Naive thymus-derived CD4-positive, alpha-beta T cell (primary cell): ENCODE measurements at regions of chr10 and their contacts with region 1.

Region 1: GRCh38 chr10:15370856-15371701 is at the start of gene FAM171A1:
- DNase-seq: peak; percentile 37 to 71 (median 62)
- ATAC-seq: peak; percentile 91
- H3K4me3 ChIP-seq: peak within 1 kb of the TSS; percentile 47
- H3K4me3 Mint-ChIP-seq: peak within 1 kb of the TSS; percentile 59 to 92 (median 83)
- H3K27ac ChIP-seq: peak within 1 kb of the TSS; percentile 21
- H3K27ac Mint-ChIP-seq: peak within 1 kb of the TSS in 8 of 9 donors; percentile 18 to 89 (median 62)
- H3K4me1 ChIP-seq: peaks cover 3 to 5% of the 10 kb centered on the region in 2 donors
- H3K4me1 Mint-ChIP-seq: peaks cover 4 to 12% (median 5%) of the 10 kb centered on the region in 7 donors
- H3K27me3 ChIP-seq: peaks cover 0 to 9% of the 10 kb centered on the region in 2 donors
- H3K27me3 Mint-ChIP-seq: peaks cover 0 to 81% (median 6%) of the 10 kb centered on the region in 5 donors
- total RNA-seq, gene FAM171A1: 3.2 to 8.0 (median 4.9) TPM

Region 2: GRCh38 chr10:14500172-14500765 is 870.8 kb before region 1 on chr10:
- CTCF ChIA-PET with region 1: no interaction called
- POLR2A ChIA-PET with region 1: no interaction called
- intact Hi-C with region 1: loop called in 1 of 2 experiments (anchors 5 kb)
- DNase-seq: no peak
- ATAC-seq: no peak
- H3K4me3 ChIP-seq: no peak overlapping the region
- H3K4me3 Mint-ChIP-seq: no peak overlapping the region
- H3K27ac ChIP-seq: no peak overlapping the region
- H3K27ac Mint-ChIP-seq: peak overlapping the region in 4 of 9 donors; percentile 28 to 56 (median 40)
- H3K4me1 ChIP-seq: no peaks in the 10 kb centered on the region
- H3K4me1 Mint-ChIP-seq: peaks cover 4 to 15% (median 6%) of the 10 kb centered on the region in 7 donors
- H3K27me3 ChIP-seq: no peaks in the 10 kb centered on the region
- H3K27me3 Mint-ChIP-seq: peaks cover 0 to 12% (median 0%) of the 10 kb centered on the region in 5 donors

Region 3: GRCh38 chr10:15097011-15097812 is 273.9 kb before region 1 on chr10 and contains the start of gene RPP38:
- CTCF ChIA-PET with region 1: no interaction called
- POLR2A ChIA-PET with region 1: no interaction called
- intact Hi-C with region 1: loop called in 1 of 2 experiments (anchors 5 kb)
- DNase-seq: peak; percentile 88 to 98 (median 95)
- ATAC-seq: peak; percentile 85
- H3K4me3 ChIP-seq: peak within 1 kb of the TSS; percentile 80
- H3K4me3 Mint-ChIP-seq: peak within 1 kb of the TSS; percentile 91 to 100 (median 98)
- H3K27ac ChIP-seq: peak within 1 kb of the TSS; percentile 94
- H3K27ac Mint-ChIP-seq: peak within 1 kb of the TSS; percentile 94 to 100 (median 98)
- H3K4me1 ChIP-seq: peaks cover 16 to 22% of the 10 kb centered on the region in 2 donors
- H3K4me1 Mint-ChIP-seq: peaks cover 22 to 50% (median 40%) of the 10 kb centered on the region in 7 donors
- H3K27me3 ChIP-seq: no peaks in the 10 kb centered on the region
- H3K27me3 Mint-ChIP-seq: peaks cover 0 to 3% (median 0%) of the 10 kb centered on the region in 5 donors
- total RNA-seq, gene RPP38: 7.6 to 22.4 (median 16.0) TPM

Region 4: DNA sequence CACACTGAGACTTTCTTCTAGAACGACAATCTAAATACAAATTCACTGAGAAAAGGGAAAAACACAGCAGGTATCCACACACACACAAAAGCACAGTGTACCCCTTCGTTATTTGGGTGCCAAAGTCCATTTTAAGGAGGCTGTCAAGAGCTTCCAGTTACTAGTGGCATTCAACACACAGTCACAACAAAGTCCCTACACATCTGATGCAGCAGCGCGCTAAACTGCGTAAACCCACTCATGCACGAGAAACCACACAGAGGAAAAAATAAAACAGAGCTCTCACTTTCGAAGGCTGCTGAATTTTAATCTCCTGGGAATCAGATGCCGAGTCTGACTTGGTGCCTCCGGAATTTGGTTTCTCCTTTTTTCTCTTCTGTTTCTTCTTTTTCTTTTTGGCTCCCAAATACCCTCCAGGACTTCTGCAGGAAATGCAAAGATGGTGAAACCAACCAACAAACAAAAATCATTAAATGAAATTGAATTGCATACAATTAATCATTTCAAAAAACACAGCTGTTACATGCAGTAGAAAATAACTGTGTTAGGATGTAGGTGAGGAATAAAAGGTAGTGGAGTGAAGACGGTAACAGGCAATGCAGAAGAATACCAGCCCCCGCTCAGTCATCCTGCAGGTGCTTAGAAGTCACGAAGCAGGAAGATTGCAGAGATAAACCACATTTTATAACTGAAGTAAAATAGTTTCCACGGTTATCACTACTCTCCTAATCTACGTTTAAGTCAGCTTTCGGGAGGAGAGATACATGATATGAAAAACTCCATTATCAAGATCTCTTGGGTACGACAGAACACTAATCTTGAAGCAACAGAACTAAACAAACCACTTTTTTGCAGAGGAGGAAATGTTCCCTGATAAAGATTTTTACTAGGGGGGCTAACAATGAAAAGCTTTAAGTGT is 229.7 kb before region 1 on chr10:
- CTCF ChIA-PET with region 1: no interaction called
- POLR2A ChIA-PET with region 1: no interaction called
- intact Hi-C with region 1: loop called in 1 of 2 experiments (anchors 5 kb)
- DNase-seq: peak in 3 of 9 donors; percentile 8 to 31 (median 9)
- ATAC-seq: peak; percentile 49
- H3K4me3 ChIP-seq: no peak overlapping the region
- H3K4me3 Mint-ChIP-seq: peak overlapping the region; percentile 21 to 83 (median 66)
- H3K27ac ChIP-seq: no peak overlapping the region
- H3K27ac Mint-ChIP-seq: peak overlapping the region in 8 of 9 donors; percentile 3 to 89 (median 53)
- H3K4me1 ChIP-seq: peaks cover 0 to 20% of the 10 kb centered on the region in 2 donors
- H3K4me1 Mint-ChIP-seq: peaks cover 28 to 74% (median 58%) of the 10 kb centered on the region in 7 donors
- H3K27me3 ChIP-seq: no peaks in the 10 kb centered on the region
- H3K27me3 Mint-ChIP-seq: no peaks in the 10 kb centered on the region

Region 5: DNA sequence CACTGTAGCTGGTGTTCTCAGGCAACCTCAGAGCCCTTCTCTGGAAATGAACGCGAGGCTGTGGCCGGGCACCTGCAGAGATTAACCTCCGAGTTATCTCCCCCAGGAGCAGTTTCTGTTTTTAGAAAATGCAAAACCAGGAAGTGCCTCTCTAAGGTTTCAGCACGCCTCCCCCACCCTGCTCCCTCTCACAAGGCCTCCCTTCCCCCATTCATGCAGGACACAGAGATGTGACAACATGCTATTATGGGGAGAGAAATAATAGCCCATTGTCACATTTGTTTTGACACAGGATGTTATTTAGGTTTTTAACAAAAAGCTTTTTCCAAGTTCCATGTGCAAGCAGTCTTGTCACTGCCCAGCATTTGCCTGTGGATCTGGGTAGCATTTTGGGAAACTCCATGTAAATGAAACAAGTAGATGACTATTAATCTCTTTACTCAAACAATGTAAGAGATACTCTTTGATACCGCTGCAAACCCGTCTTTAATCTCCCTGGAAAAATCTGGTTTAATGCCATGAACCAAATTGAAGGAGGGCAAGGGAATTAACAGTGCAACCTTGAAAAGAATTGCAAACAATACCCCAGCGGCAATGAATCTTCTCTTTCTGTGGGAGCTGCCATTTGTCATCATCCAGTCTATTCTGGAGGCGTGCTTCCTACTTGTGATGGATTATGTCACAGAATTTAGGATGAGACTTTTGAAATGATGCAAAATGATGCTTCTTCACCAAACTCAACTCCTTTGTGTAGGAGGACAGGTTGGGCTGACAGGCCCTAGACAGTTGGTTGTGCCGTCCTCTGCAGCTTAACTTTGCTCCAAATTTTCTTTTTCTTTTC is 116.1 kb before region 1 on chr10:
- CTCF ChIA-PET with region 1: no interaction called
- POLR2A ChIA-PET with region 1: no interaction called
- intact Hi-C with region 1: loop called (anchors 5 to 10 kb)
- DNase-seq: peak in 6 of 9 donors; percentile 10 to 35 (median 24)
- ATAC-seq: peak; percentile 45
- H3K4me3 ChIP-seq: peak overlapping the region; percentile 74
- H3K4me3 Mint-ChIP-seq: peak overlapping the region; percentile 87 to 99 (median 95)
- H3K27ac ChIP-seq: peak overlapping the region; percentile 76
- H3K27ac Mint-ChIP-seq: peak overlapping the region; percentile 68 to 95 (median 93)
- H3K4me1 ChIP-seq: peaks cover 8 to 10% of the 10 kb centered on the region in 2 donors
- H3K4me1 Mint-ChIP-seq: peaks cover 22 to 52% (median 44%) of the 10 kb centered on the region in 7 donors
- H3K27me3 ChIP-seq: no peaks in the 10 kb centered on the region
- H3K27me3 Mint-ChIP-seq: peaks cover 0 to 5% (median 0%) of the 10 kb centered on the region in 5 donors